CD8-positive, alpha-beta memory T cell (primary cell): ENCODE measurements at regions of chr1 and their contacts with region 1.

Region 1: DNA sequence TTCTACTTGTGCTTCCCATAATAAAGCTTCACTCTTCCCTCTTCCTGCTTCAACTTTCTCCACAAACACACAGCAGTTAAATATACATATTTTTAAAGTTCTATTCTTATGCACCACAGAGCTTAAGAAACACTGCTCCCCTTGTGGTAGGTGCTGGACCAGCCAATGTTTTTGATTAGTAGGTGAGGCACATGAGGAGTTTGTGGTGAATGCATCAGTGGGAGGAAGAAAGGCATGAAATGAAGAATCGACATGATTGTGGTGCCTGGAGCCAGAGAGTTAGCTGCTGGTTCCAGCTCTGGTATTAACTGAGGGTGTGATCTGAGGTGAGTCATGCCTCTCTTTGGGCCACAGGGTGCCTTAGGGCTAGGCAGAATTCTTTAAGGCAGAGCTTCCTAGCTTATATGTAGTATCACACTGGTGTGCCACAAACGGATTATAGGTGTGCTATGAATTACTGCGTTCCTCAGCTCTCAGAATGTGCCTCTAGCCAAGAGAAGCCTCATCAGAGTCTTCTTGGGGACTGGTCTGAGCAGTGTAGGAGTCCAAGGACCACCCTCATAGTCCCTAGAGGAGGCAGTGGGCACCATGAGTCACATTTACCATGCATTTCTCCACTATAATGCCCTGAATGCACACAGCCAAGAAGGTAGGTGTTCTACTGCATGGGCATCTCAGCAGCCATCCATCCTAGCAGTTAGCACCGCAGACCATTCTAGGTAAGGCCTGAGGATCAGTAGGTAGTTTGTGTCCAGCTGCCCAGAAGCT is 97.4 kb upstream of the SGIP1 start:
- DNase-seq: peak in 3 of 5 donors; percentile 19 to 50 (median 21)
- H3K4me3 ChIP-seq: no peak overlapping the region
- H3K4me3 Mint-ChIP-seq: no peak overlapping the region
- H3K27ac ChIP-seq: no peak overlapping the region
- H3K27ac Mint-ChIP-seq: peak overlapping the region in 5 of 8 donors; percentile 9 to 57 (median 21)
- H3K4me1 ChIP-seq: no peaks in the 10 kb centered on the region
- H3K4me1 Mint-ChIP-seq: peaks cover 5 to 20% (median 17%) of the 10 kb centered on the region in 3 donors
- H3K27me3 ChIP-seq: no peaks in the 10 kb centered on the region
- H3K27me3 Mint-ChIP-seq: peaks cover 0 to 3% of the 10 kb centered on the region in 2 donors

Region 2: GRCh38 chr1:65493802-65494201 is 942.8 kb before region 1 on chr1:
- CTCF ChIA-PET with region 1: no interaction called
- POLR2A ChIA-PET with region 1: no interaction called
- DNase-seq: no peak
- H3K4me3 ChIP-seq: no peak overlapping the region
- H3K4me3 Mint-ChIP-seq: no peak overlapping the region
- H3K27ac ChIP-seq: no peak overlapping the region
- H3K27ac Mint-ChIP-seq: no peak overlapping the region
- H3K4me1 ChIP-seq: no peaks in the 10 kb centered on the region
- H3K4me1 Mint-ChIP-seq: no peaks in the 10 kb centered on the region
- H3K27me3 ChIP-seq: no peaks in the 10 kb centered on the region
- H3K27me3 Mint-ChIP-seq: no peaks in the 10 kb centered on the region

Region 3: DNA sequence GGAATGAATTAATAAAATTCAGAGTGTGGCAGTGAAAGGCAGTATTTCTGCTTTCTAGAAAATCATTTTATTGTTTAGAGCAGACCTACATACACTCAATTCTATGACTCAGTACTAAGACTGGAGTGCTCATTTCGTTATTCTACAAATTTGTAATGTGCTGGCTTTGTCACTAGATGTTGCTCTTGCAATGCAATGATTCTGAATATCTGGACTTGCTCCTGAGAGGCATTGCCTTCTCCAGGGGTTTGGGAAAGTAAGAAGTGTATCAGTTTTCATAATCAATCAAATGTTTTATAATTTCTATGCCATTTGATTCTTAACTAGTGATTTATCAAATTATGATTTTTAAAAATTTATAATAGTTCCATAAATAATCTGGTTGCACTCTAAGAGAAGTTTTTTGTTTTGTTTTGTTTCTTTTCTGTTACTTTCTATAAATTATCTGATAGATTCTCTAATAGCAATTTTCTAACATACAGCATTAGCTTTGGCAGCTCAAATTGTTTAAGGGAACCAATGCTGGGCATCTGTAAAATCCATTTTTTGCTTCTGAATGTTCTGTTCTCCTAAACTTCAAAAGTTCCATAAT is 183.1 kb before region 1 on chr1:
- CTCF ChIA-PET with region 1: interaction called, 272 read pairs
- POLR2A ChIA-PET with region 1: no interaction called
- DNase-seq: peak in 2 of 5 donors; percentile 39 to 46
- H3K4me3 ChIP-seq: no peak overlapping the region
- H3K4me3 Mint-ChIP-seq: no peak overlapping the region
- H3K27ac ChIP-seq: no peak overlapping the region
- H3K27ac Mint-ChIP-seq: no peak overlapping the region
- H3K4me1 ChIP-seq: no peaks in the 10 kb centered on the region
- H3K4me1 Mint-ChIP-seq: peaks cover 9 to 35% (median 30%) of the 10 kb centered on the region in 3 donors
- H3K27me3 ChIP-seq: no peaks in the 10 kb centered on the region
- H3K27me3 Mint-ChIP-seq: no peaks in the 10 kb centered on the region

Region 4: DNA sequence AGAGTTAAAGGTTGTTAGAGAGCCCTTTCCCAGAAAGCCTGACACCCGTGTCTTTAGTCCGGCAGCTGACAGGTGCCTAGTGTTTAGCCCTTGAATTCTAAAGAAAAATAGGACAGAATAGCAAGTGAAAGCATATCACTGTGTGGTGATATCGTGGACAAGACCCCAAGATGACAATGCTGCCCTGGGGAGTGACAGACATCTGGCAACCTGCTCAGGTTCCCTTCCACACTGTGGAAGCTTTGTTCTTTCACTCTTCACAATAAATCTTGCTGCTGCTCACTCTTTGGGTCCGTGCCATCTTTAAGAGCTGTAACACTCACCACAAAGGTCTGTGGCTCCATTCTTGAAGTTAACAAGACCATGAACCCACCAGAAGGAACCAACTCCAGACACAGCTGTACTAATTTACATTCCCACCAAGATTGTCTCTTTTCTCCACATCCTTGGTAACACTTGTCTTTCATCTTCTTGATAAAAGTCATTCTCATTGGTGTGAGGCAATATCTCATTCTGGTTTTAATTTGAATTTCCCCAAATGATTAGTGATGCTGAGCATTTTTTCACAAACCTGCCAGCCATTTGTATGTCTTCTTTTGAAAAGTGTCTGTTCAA is 10.2 kb before region 1 on chr1:
- CTCF ChIA-PET with region 1: no interaction called
- POLR2A ChIA-PET with region 1: no interaction called
- DNase-seq: no peak
- H3K4me3 ChIP-seq: no peak overlapping the region
- H3K4me3 Mint-ChIP-seq: no peak overlapping the region
- H3K27ac ChIP-seq: no peak overlapping the region
- H3K27ac Mint-ChIP-seq: peak overlapping the region in 1 of 8 donors; percentile 20
- H3K4me1 ChIP-seq: no peaks in the 10 kb centered on the region
- H3K4me1 Mint-ChIP-seq: peaks cover 0 to 7% (median 0%) of the 10 kb centered on the region in 3 donors
- H3K27me3 ChIP-seq: no peaks in the 10 kb centered on the region
- H3K27me3 Mint-ChIP-seq: peaks cover 0 to 1% of the 10 kb centered on the region in 2 donors